Activated naive CD8-positive, alpha-beta T cell treated with anti-CD3 and anti-CD28 coated beads, Interleukin-2, amount 10 ng/mL, durations not matched to agents 7 days and 5 days (primary cell): ENCODE measurements at regions of chr7 and their contacts with region 1.

Region 1: GRCh38 chr7:87219545-87220025 is at the start of gene TMEM243:
- DNase-seq: peak; percentile 83
- ATAC-seq: peak; percentile 72
- H3K4me3 Mint-ChIP-seq: peak within 1 kb of the TSS; percentile 98
- H3K27ac Mint-ChIP-seq: peak within 1 kb of the TSS; percentile 99
- H3K4me1 Mint-ChIP-seq: peaks cover 24% of the 10 kb centered on the region
- H3K27me3 Mint-ChIP-seq: peaks cover 6% of the 10 kb centered on the region
- total RNA-seq, gene TMEM243: 56.1 to 59.5 TPM

Region 2: DNA sequence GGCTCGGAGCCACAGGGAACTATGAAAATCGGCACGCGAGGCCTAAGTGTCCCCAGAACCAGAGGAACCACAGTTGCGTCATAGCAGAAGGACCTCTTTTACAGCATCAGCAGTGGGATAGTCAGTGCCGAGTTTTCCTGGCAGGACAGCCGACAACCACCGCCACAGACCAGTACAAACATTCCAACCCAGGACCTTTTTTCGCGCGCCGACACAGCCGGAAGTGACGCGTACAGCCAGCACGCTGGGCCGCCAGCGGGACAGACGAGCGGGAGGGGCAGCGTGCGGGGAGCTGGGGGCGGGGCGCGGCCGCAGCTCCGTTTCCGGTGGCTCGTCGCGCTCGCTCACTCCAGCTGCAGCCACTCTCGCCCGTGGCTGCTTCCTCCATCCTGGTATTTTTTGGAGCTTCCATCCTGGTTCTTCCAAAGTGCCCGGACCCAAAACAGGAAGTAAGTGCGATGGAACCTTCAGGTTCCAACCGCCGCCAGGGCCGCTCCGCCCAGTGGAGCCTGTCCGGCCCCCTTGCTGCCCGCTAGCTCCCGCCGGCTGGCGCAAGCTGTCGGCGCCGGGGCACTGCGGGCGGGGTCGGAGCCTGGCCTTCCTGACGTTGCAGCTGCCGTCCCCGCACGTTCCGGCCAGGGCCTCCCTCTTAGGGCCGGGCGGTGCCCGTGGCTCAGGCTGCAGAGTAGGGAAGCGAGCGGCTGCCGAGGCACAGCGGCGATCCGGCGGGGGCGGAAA is 67.3 kb before region 1 on chr7 and contains the start of gene DMTF1:
- POLR2A ChIA-PET with region 1: interaction called, 119 read pairs
- DNase-seq: peak; percentile 87
- ATAC-seq: peak; percentile 86
- H3K4me3 Mint-ChIP-seq: peak within 1 kb of the TSS; percentile 92
- H3K27ac Mint-ChIP-seq: peak within 1 kb of the TSS; percentile 92
- H3K4me1 Mint-ChIP-seq: peaks cover 29% of the 10 kb centered on the region
- H3K27me3 Mint-ChIP-seq: no peaks in the 10 kb centered on the region
- total RNA-seq, gene DMTF1: 131 to 137 TPM

Region 3: GRCh38 chr7:87199700-87200450 is 19.7 kb before region 1 on chr7:
- POLR2A ChIA-PET with region 1: interaction called, 10 read pairs
- DNase-seq: no peak
- ATAC-seq: no peak
- H3K4me3 Mint-ChIP-seq: no peak overlapping the region
- H3K27ac Mint-ChIP-seq: peak overlapping the region; percentile 3
- H3K4me1 Mint-ChIP-seq: peaks cover 21% of the 10 kb centered on the region
- H3K27me3 Mint-ChIP-seq: no peaks in the 10 kb centered on the region

Region 4: GRCh38 chr7:87267239-87267900 is 47.8 kb after region 1 on chr7:
- POLR2A ChIA-PET with region 1: no interaction called
- DNase-seq: no peak
- ATAC-seq: no peak
- H3K4me3 Mint-ChIP-seq: no peak overlapping the region
- H3K27ac Mint-ChIP-seq: no peak overlapping the region
- H3K4me1 Mint-ChIP-seq: no peaks in the 10 kb centered on the region
- H3K27me3 Mint-ChIP-seq: peaks cover 10% of the 10 kb centered on the region